ENCODE measurements at regions of chrX and their contacts with region 1.

Region 1: DNA sequence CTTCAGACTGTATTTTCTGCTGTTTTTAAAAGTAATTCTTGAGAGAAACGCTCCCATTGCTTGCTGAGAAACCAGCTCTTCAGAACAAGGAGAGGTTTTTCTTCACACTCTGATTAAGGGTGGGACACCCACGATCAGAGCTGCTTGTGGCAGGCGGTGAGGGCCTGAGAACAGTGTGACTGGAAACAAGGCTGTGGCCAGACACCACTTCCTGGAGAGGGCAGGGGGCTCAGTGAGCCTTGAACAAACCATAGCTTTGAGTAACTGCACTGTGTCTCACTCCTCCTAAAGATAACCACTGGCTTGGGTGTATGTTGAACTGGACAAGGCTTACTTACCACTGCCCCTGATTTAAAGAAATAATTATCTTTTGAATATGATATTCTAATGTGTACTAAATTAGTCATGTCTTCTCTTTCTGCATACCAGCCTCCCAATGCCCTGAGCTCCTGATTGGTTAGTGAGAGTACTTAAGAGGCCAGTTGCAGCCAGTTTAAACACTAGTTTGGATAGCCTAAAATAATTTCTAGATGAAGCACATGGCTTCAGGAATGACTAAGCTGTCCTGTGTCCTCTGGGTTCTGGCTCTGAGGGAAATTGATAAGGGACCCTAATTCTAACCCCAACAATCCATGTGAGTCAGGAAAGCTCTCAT is 3.7 kb upstream of the GPR82 start:
- DNase-seq: peak; percentile 72
- H3K4me3 Mint-ChIP-seq: no peak overlapping the region
- H3K27ac Mint-ChIP-seq: peak overlapping the region; percentile 30
- H3K4me1 Mint-ChIP-seq: peaks cover 59% of the 10 kb centered on the region
- H3K27me3 Mint-ChIP-seq: no peaks in the 10 kb centered on the region

Region 2: GRCh38 chrX:41664307-41665299 is 55.6 kb before region 1 on chrX:
- CTCF ChIA-PET with region 1: no interaction called
- POLR2A ChIA-PET with region 1: interaction called, 3 read pairs
- intact Hi-C with region 1: loop called (anchors 5 kb)
- DNase-seq: peak; percentile 33
- H3K4me3 Mint-ChIP-seq: no peak overlapping the region
- H3K27ac Mint-ChIP-seq: peak overlapping the region; percentile 73
- H3K4me1 Mint-ChIP-seq: peaks cover 47% of the 10 kb centered on the region
- H3K27me3 Mint-ChIP-seq: no peaks in the 10 kb centered on the region

Region 3: DNA sequence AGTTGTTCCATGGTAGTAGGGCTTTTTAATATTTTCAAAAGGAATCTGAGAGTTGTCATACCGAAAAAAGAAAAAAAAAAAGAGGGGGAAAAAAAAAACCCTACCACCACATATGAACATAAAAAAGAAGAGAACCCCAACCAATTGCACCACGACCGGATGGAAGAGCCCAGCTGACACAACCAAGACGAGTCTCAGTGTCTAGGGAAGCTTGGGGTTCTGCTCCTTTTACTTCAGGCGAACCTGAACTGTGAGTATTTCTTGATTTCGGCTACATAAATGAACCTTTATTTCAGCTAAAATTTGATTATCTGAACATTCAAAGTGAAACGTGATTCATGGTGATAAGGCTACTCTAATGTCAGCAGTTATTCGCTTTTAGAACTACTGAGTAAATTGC is 31.4 kb before region 1 on chrX and contains the start of gene GPR34:
- CTCF ChIA-PET with region 1: no interaction called
- POLR2A ChIA-PET with region 1: no interaction called
- intact Hi-C with region 1: loop called (anchors 5 kb)
- DNase-seq: peak; percentile 38
- H3K4me3 Mint-ChIP-seq: no peak within 1 kb of the TSS
- H3K27ac Mint-ChIP-seq: no peak within 1 kb of the TSS
- H3K4me1 Mint-ChIP-seq: peaks cover 35% of the 10 kb centered on the region
- H3K27me3 Mint-ChIP-seq: no peaks in the 10 kb centered on the region
- total RNA-seq, gene GPR34: 0.24 to 0.36 TPM

Region 4: GRCh38 chrX:41703574-41704029 is 16.6 kb before region 1 on chrX:
- CTCF ChIA-PET with region 1: interaction called, 3 read pairs
- POLR2A ChIA-PET with region 1: no interaction called
- intact Hi-C with region 1: loop called (anchors 2 kb)
- DNase-seq: no peak
- H3K4me3 Mint-ChIP-seq: no peak overlapping the region
- H3K27ac Mint-ChIP-seq: no peak overlapping the region
- H3K4me1 Mint-ChIP-seq: peaks cover 40% of the 10 kb centered on the region
- H3K27me3 Mint-ChIP-seq: no peaks in the 10 kb centered on the region

Measured in activated CD4-positive, alpha-beta memory T cell treated with anti-CD3 and anti-CD28 coated beads for 36 hours (primary cell).